ENCODE measurements at regions of chr4 and their contacts with region 1.

Region 1: DNA sequence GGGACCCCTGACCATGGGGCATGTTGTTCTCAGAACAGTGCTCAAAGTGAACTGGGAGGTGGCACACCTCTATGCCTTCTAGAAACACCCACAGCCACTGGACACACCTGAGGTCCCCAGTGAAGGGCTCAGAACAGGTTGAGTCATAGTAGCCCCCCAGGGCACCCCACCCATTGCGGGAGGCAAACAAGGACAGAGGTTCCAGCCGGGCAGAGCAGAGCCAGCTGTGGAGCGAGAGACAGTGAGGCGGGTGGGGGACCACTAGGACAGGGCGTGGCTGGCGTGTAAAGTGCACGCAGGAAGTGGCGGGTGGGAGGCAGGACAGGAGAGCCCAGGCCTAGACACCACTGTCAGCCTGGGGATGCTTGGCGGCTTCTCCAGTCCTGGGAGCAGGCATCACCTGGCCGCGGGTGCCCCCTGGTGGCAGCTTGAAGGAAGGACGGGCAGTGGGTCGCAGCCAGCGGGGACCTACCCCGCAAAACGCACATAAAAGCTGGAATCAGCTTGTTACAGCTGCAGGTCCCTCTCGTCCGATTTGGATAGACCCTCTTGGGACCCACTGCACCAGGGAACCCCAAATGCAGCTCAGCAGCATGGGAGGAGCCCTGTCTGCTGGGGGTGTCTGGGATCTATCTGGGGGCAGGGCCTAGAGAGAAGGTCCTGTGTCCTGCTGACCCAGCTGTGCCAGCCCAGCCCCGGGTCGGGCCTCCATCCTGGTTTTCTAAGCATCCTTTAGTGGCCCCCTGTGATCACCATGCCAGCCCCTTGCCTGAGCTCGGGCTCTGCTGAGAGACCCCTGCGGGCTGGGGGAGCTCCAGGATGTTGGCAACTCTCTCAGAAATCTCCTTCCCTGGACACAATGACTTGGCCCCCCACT is 57.6 kb downstream of the WFS1 start:
- DNase-seq: peak; percentile 63 to 97
- H3K4me3 ChIP-seq: no peak overlapping the region
- CTCF ChIP-seq: peak in 2 of 3 donors; percentile 75 to 89
- POLR2A ChIP-seq: no peak

Region 2: DNA sequence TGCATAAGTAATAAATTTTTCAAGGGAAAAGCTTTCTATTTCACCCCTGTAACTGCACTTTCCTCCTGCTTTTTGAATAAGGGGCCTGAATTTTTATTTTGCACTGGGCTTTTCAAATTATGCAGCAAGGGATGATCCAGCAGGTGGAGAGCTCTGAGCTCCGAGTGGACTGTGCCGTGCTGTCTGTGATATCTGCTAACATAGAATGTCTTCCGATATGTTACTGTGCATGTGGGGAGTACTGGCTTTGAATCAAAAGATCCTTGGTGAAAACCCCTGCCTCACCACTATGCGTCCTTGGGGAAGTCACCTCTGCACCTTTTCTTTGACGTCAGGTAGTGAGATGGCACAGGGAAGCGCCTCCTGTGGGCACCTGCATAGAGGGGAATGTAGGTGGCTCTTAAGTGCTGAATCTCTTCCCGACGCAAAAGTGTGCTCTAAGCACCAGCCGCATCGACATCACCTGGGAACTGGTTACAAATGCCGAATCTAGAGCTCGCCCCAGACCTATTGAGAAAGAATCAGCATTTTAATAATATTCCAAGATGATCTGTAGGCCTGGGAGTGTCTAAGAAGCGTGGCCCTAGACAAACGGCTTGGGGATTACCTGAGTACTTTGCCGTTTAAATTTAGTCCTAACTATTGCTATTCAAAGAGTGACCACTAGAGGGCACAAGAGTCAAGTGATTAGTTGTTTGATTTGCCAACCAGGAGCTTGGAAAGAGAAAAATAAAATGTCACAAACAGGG is 76.9 kb before region 1 on chr4:
- intact Hi-C with region 1: loop called (anchors 2 kb)
- DNase-seq: no peak
- H3K4me3 ChIP-seq: no peak overlapping the region
- CTCF ChIP-seq: peak in 1 of 3 donors; percentile 35
- POLR2A ChIP-seq: no peak

Region 3: GRCh38 chr4:6470502-6471306 is 143.4 kb after region 1 on chr4:
- intact Hi-C with region 1: no loop called
- DNase-seq: peak; percentile 15 to 82
- H3K4me3 ChIP-seq: peak overlapping the region; percentile 18
- CTCF ChIP-seq: no peak
- POLR2A ChIP-seq: no peak

Region 4: DNA sequence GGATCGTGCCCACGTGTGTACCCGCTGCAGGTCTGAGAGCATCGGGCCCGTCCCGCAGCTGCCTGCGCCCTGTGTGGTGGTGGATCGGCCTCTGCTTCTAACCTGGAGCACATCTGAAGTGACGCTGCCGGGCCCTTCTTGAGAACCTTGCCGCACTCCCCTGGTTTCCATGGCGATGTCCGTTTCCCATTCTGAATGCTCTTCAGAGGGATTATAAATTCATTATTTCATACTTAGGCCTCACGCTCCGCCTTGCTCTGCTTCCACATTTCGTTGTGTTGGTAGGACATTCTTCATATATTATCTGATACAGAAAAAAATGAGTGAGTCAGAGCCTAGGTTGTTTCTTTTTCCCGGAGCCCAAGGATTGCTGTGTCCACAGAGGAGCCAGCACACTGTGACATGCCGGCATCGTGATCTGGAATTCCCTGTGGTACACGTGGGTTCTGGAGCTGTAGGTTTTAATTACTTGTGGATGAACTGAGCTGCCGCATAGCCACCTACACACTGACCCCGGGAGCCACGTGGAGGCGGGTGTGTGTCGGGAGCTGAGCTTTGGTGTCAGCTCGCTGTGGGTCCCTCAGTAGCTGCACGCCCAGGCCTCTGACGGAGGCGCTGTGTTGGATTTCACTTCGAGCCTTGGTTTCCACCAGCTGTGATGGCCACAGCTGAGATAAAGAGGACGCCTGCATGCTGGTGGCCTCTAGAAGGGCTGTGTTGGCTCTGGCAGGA is 1044.1 kb after region 1 on chr4:
- intact Hi-C with region 1: no loop called
- DNase-seq: no peak
- H3K4me3 ChIP-seq: no peak overlapping the region
- CTCF ChIP-seq: no peak
- POLR2A ChIP-seq: no peak